ENCODE measurements at regions of chr7 and their contacts with region 1.

Region 1: GRCh38 chr7:77759294-77759889 is 38.8 kb downstream of the TMEM60 start:
- DNase-seq: peak; percentile 36 to 74
- H3K4me3 ChIP-seq: no peak overlapping the region
- H3K27ac ChIP-seq: peak overlapping the region in 1 of 2 donors; percentile 52
- H3K4me1 ChIP-seq: peaks cover 0 to 4% of the 10 kb centered on the region in 2 donors
- H3K27me3 ChIP-seq: no peaks in the 10 kb centered on the region
- CTCF ChIP-seq: peak; percentile 74 to 81 (median 78)
- POLR2A ChIP-seq: no peak

Region 2: GRCh38 chr7:77651573-77652162 is 107.7 kb before region 1 on chr7:
- intact Hi-C with region 1: loop called (anchors 5 kb)
- DNase-seq: peak in 1 of 2 donors; percentile 25
- H3K4me3 ChIP-seq: no peak overlapping the region
- H3K27ac ChIP-seq: no peak overlapping the region
- H3K4me1 ChIP-seq: no peaks in the 10 kb centered on the region
- H3K27me3 ChIP-seq: no peaks in the 10 kb centered on the region
- CTCF ChIP-seq: peak; percentile 61 to 73 (median 70)
- POLR2A ChIP-seq: no peak

Region 3: DNA sequence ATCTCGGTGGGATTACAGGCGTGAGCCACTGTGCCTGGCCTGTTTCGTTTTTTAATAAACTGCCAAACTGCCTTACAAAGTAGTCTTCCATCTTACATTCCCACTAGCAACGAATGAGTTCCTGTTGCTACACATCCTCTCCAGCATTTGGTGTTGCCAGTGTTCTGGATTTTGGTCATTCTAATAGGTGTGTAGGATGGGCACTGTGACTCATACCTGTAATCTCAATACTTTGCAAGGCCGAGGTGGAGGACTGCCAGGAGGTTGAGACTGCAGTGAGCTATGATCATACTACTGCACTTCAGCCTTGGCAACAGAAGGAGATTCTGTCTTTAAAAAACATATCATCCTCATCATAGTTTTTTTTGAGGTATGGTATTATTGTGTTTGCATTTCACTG is 84.5 kb before region 1 on chr7:
- intact Hi-C with region 1: no loop called
- DNase-seq: no peak
- H3K4me3 ChIP-seq: no peak overlapping the region
- H3K27ac ChIP-seq: no peak overlapping the region
- H3K4me1 ChIP-seq: no peaks in the 10 kb centered on the region
- H3K27me3 ChIP-seq: no peaks in the 10 kb centered on the region
- CTCF ChIP-seq: no peak
- POLR2A ChIP-seq: no peak

Region 4: GRCh38 chr7:77971726-77972125 is 212.3 kb after region 1 on chr7:
- intact Hi-C with region 1: no loop called
- DNase-seq: no peak
- H3K4me3 ChIP-seq: no peak overlapping the region
- H3K27ac ChIP-seq: no peak overlapping the region
- H3K4me1 ChIP-seq: no peaks in the 10 kb centered on the region
- H3K27me3 ChIP-seq: no peaks in the 10 kb centered on the region
- CTCF ChIP-seq: no peak
- POLR2A ChIP-seq: no peak

Region 5: DNA sequence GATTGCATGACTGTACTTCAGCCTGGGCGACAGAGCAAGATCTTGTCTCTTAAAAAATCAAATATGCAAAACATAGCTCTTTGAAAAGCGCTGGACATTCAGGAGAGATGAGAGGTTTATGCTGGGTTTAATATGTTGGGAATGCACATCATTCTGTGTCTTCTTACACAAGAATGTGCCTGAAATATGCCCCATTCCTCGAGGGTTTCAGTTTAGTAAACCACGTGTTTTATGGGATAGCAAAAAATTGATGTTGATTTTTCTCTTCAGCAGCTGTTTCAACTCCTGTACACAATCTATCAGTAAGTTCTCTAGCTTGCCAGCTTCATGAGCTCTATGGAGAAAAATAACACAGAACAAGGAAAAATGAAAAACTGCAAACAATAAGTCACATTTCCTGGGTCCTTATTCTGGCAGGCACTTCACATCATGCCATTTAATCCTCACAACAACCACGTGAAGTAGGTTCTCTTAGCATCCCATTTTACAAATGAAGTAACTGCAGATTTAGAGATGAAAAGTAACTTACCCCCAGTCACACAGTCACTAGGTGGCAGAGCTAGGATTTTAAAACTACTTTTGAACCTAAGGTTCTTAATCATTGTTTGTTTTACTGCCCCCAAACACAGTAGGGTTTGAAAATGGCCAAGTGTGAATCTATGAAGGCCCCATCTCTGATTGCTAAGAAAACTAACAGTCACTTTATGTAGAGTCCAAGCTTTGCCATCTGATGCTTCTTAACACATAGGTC is 462.8 kb after region 1 on chr7:
- intact Hi-C with region 1: no loop called
- DNase-seq: no peak
- H3K4me3 ChIP-seq: no peak overlapping the region
- H3K27ac ChIP-seq: no peak overlapping the region
- H3K4me1 ChIP-seq: no peaks in the 10 kb centered on the region
- H3K27me3 ChIP-seq: no peaks in the 10 kb centered on the region
- CTCF ChIP-seq: no peak
- POLR2A ChIP-seq: no peak

Region 6: DNA sequence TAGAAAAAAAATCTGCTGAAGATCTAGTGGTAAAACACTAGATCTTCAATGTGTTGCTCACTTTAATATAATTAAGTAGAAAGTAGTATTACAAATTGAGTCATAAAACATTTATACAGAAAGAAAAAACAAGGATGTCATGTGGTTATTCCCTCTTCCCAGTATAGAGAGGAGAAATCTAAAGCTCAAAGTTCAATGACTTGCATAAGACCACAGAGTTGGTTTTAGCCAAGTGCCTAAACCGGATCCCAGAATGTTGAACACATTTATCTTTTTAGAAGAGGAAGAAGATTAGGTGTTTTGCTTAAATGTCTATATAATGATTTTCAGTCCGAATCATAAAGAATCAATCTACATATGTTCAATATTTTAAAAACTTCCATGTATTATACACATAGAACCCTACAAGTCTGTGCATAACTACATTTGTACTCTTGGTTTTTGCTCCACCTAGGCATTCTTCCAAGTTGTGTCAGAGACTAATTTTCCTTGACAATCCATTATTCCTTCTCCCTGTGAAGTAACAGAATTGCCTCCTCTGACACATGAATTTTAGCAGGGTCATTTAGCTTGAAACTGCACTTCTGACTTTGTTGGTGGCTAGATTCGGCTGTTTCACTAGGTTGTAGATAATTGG is 1304.9 kb after region 1 on chr7:
- intact Hi-C with region 1: no loop called
- DNase-seq: no peak
- H3K4me3 ChIP-seq: no peak overlapping the region
- H3K27ac ChIP-seq: no peak overlapping the region
- H3K4me1 ChIP-seq: no peaks in the 10 kb centered on the region
- H3K27me3 ChIP-seq: no peaks in the 10 kb centered on the region
- CTCF ChIP-seq: no peak
- POLR2A ChIP-seq: no peak